ENCODE measurements at regions of chr6 and their contacts with region 1.

Region 1: GRCh38 chr6:89819336-89820130 is at the start of gene MDN1:
- H3K4me3 Mint-ChIP-seq: peak within 1 kb of the TSS; percentile 89
- H3K27ac Mint-ChIP-seq: peak within 1 kb of the TSS; percentile 90
- H3K4me1 Mint-ChIP-seq: peaks cover 33% of the 10 kb centered on the region
- H3K27me3 Mint-ChIP-seq: no peaks in the 10 kb centered on the region

Region 2: DNA sequence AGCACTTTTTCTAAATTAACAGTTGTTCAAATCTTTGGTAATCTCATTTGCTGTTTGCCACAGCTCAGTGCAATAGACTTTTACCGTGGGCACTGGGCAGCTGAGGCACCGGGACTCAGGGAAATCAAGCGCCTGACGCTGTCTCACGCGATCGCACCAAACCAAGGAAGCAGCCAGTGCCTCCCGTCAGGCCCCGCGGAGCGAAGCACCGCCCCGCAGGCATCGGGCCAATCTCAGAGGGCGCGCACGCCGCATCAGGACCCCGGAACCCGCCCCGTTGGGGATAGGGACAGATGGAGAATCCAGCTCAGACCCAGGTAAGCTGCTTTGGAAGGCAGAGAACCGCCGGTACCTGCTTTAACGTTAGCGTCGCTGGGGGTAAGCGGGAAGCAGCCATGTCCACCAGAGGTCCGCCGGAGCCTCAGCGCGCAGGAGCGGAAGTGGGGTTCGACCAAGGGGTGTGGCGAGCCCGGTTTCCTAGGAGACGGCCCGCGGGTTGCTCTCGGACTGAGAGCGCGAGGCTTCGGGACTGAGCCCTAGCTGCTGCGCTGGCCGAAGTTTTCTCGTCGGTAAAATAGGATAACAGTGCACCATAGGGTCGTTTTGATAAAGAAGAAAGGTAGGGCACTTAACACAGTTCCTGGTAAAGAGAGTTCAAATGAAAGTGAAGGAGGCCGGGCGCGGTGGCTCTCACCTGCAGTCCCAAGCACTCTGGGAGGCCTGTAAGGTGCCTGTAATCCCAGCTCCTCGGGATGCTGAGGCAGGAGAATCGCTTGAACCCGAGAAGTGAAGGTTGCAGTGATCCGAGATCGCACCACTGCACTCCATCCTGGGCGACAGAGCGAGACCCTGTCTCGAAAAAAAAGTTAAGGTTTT is 181.0 kb before region 1 on chr6 and contains the start of gene LYRM2:
- intact Hi-C with region 1: loop called (anchors 5 kb)
- H3K4me3 Mint-ChIP-seq: peak within 1 kb of the TSS; percentile 86
- H3K27ac Mint-ChIP-seq: peak within 1 kb of the TSS; percentile 97
- H3K4me1 Mint-ChIP-seq: peaks cover 17% of the 10 kb centered on the region
- H3K27me3 Mint-ChIP-seq: no peaks in the 10 kb centered on the region

Region 3: GRCh38 chr6:90156861-90157260 is 337.3 kb after region 1 on chr6:
- intact Hi-C with region 1: no loop called
- H3K4me3 Mint-ChIP-seq: no peak overlapping the region
- H3K27ac Mint-ChIP-seq: no peak overlapping the region
- H3K4me1 Mint-ChIP-seq: peaks cover 5% of the 10 kb centered on the region
- H3K27me3 Mint-ChIP-seq: no peaks in the 10 kb centered on the region

Measured in dendritic cell treated with granulocyte-macrophage colony-stimulating factor and Interleukin-4, amounts not matched to agents 40 ng/mL and 50 ng/mL, for 4 days (primary cell).